ENCODE measurements at regions of chr20 and their contacts with region 1.

Region 1: GRCh38 chr20:34876162-34877001 is at the start of gene ACSS2:
- DNase-seq: peak; percentile 99
- ATAC-seq: peak; percentile 81
- H3K4me3 Mint-ChIP-seq: peak within 1 kb of the TSS; percentile 94
- H3K27ac Mint-ChIP-seq: peak within 1 kb of the TSS; percentile 93
- H3K4me1 Mint-ChIP-seq: peaks cover 51% of the 10 kb centered on the region
- H3K27me3 Mint-ChIP-seq: peaks cover 2% of the 10 kb centered on the region
- total RNA-seq, gene ACSS2: 27.4 to 29.6 TPM

Region 2: GRCh38 chr20:34955232-34956040 is 79.1 kb after region 1 on chr20 and contains the starts of genes GSS and MYH7B:
- POLR2A ChIA-PET with region 1: interaction called, 44 read pairs
- DNase-seq: peak; percentile 100
- ATAC-seq: peak; percentile 98
- H3K4me3 Mint-ChIP-seq: peak within 1 kb of the TSS; percentile 98
- H3K27ac Mint-ChIP-seq: peak within 1 kb of the TSS; percentile 91
- H3K4me1 Mint-ChIP-seq: peaks cover 23% of the 10 kb centered on the region
- H3K27me3 Mint-ChIP-seq: peaks cover 3% of the 10 kb centered on the region
- total RNA-seq, gene GSS: 53.8 to 57.2 TPM
- total RNA-seq, gene MYH7B: 0.20 to 0.55 TPM